Activated CD4-positive, alpha-beta memory T cell treated with anti-CD3 and anti-CD28 coated beads, Interleukin-2, amount 10 ng/mL, durations not matched to agents 7 days and 5 days (primary cell): ENCODE measurements at regions of chr5 and their contacts with region 1.

Region 1: GRCh38 chr5:149990518-149991376 is 9.7 kb downstream of the TIGD6 start:
- DNase-seq: peak; percentile 75
- H3K4me3 Mint-ChIP-seq: no peak overlapping the region
- H3K27ac Mint-ChIP-seq: no peak overlapping the region
- H3K4me1 Mint-ChIP-seq: peaks cover 2% of the 10 kb centered on the region
- H3K27me3 Mint-ChIP-seq: no peaks in the 10 kb centered on the region

Region 2: GRCh38 chr5:149828161-149828884 is 162.4 kb before region 1 on chr5:
- CTCF ChIA-PET with region 1: interaction called, 126 read pairs
- POLR2A ChIA-PET with region 1: interaction called, 4 read pairs
- DNase-seq: peak; percentile 85
- H3K4me3 Mint-ChIP-seq: no peak overlapping the region
- H3K27ac Mint-ChIP-seq: no peak overlapping the region
- H3K4me1 Mint-ChIP-seq: peaks cover 9% of the 10 kb centered on the region
- H3K27me3 Mint-ChIP-seq: no peaks in the 10 kb centered on the region

Region 3: DNA sequence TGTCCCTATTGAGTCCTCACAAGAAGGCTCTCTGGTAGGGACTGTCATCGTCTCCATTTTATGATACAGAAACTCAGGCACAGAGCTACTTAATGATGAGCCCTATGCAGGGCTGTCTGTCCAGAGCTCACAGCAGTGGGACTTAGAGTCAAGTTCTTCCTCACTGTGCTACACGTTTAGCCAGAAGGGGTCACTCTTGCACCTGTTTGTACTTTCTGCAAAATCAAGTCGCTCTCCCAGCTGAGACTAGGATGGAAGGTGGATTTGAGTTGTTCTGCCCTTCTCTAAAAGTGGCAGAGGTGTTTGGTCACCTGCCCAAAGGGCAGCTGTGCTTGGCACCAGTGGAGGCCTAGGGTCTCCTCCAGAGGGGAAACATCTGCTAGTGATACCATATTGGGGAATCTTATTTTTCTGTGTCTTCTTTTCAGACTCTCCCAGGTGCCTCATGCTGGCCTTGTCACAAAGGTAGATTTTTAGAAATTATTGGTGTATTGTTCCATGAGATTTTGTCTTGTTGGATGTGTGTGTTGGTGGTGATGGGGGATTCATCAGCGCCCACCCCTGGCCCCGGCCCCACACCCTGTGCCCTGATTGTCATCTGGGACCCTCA is 156.4 kb before region 1 on chr5:
- CTCF ChIA-PET with region 1: interaction called, 126 read pairs
- POLR2A ChIA-PET with region 1: interaction called, 4 read pairs
- DNase-seq: peak; percentile 64
- H3K4me3 Mint-ChIP-seq: no peak overlapping the region
- H3K27ac Mint-ChIP-seq: no peak overlapping the region
- H3K4me1 Mint-ChIP-seq: peaks cover 7% of the 10 kb centered on the region
- H3K27me3 Mint-ChIP-seq: no peaks in the 10 kb centered on the region

Region 4: DNA sequence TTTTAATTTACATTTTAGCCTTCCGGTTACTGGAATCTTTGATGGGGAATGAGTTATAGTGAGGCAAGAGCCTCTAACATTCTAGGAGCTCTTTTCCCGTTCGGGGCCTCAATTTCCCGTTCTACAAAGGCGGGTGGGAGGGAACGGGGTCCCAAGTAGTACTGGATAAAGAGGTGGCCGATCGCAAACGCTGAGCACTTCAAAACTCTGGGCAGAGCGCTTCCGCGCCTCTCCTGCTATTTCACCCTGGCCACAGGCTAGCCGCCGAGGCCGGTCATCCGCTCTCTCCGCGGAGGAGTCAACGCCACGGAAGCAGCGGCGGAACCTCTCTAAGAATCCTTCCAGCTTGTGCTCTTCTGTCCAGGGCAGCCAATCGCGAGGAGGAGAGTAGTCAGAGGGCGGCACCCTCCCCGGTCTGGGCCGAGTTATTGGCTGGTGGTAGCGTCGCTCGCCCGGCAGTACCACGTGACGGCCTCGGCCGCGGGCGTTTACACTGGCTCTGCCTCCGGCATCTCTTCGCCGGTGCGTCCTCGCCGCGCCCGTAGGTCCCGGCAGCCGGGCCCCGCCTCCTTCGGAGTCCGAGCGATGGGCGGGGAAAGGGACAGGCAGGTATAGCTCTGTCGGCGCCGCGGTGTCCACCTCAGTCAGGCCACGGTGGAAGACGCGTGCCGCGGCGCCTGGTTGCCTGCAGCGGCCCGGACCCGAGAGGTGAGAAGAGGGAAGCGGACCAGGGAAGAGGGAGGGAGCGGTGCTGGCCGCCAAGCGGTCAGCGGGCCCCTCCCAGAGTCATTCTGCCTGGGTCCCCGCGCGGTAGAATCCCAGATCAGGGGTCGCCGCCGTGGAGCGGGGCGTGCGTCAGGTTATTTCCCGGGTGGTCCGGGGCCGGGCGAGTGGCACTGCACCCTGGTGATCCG is 30.2 kb before region 1 on chr5 and contains the start of gene SLC26A2:
- CTCF ChIA-PET with region 1: interaction called, 17 read pairs
- POLR2A ChIA-PET with region 1: interaction called, 4 read pairs
- DNase-seq: peak; percentile 97
- H3K4me3 Mint-ChIP-seq: peak within 1 kb of the TSS; percentile 74
- H3K27ac Mint-ChIP-seq: peak within 1 kb of the TSS; percentile 86
- H3K4me1 Mint-ChIP-seq: peaks cover 36% of the 10 kb centered on the region
- H3K27me3 Mint-ChIP-seq: no peaks in the 10 kb centered on the region
- total RNA-seq, gene SLC26A2: 8.3 to 8.4 TPM

Region 5: GRCh38 chr5:149979896-149980295 is 10.9 kb before region 1 on chr5:
- CTCF ChIA-PET with region 1: interaction called, 20 read pairs
- POLR2A ChIA-PET with region 1: no interaction called
- DNase-seq: no peak
- H3K4me3 Mint-ChIP-seq: no peak overlapping the region
- H3K27ac Mint-ChIP-seq: no peak overlapping the region
- H3K4me1 Mint-ChIP-seq: no peaks in the 10 kb centered on the region
- H3K27me3 Mint-ChIP-seq: no peaks in the 10 kb centered on the region